Adrenal gland (tissue), 19 donors: ENCODE measurements at regions of chr10 and their contacts with region 1.

Region 1: GRCh38 chr10:31875608-31876007 is 53.0 kb downstream of the ARHGAP12 start:
- DNase-seq: no peak
- H3K4me3 ChIP-seq: no peak overlapping the region
- H3K27ac ChIP-seq: no peak overlapping the region
- H3K4me1 ChIP-seq: peaks cover 0 to 37% of the 10 kb centered on the region in 2 donors
- H3K27me3 ChIP-seq: no peaks in the 10 kb centered on the region
- CTCF ChIP-seq: no peak
- POLR2A ChIP-seq: no peak

Region 2: DNA sequence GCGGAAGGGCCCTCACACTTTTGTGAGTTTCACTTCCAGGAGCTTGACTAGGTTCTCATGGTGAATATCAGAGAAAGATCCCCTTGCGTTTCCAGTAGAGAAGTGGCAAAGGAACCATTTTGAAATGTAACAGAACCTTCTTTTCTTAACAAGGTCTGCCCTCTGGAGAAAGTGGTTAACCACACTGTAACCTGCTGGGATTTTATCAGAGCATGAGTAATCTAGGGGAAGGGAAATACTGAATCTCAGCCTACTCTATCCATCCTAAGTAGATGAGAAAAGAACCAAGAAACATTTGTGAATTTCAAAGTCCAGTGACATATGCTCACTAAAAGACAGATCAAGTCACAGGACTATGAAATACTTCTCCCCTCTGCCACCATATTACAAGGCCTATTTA is 321.1 kb before region 1 on chr10:
- intact Hi-C with region 1: no loop called
- DNase-seq: no peak
- H3K4me3 ChIP-seq: no peak overlapping the region
- H3K27ac ChIP-seq: no peak overlapping the region
- H3K4me1 ChIP-seq: no peaks in the 10 kb centered on the region
- H3K27me3 ChIP-seq: no peaks in the 10 kb centered on the region
- CTCF ChIP-seq: no peak
- POLR2A ChIP-seq: no peak

Region 3: GRCh38 chr10:31928549-31929260 is 53.1 kb after region 1 on chr10 and contains the start of gene ARHGAP12:
- intact Hi-C with region 1: loop called in 1 of 2 experiments (anchors 10 kb)
- DNase-seq: peak; percentile 87 to 95 (median 89)
- H3K4me3 ChIP-seq: peak within 1 kb of the TSS; percentile 63 to 94 (median 90)
- H3K27ac ChIP-seq: peak within 1 kb of the TSS; percentile 78 to 96 (median 94)
- H3K4me1 ChIP-seq: peaks cover 8 to 38% of the 10 kb centered on the region in 2 donors
- H3K27me3 ChIP-seq: no peaks in the 10 kb centered on the region
- CTCF ChIP-seq: no peak
- POLR2A ChIP-seq: peak; percentile 76 to 98
- total RNA-seq, gene ARHGAP12: 26.7 to 88.6 (median 32.8) TPM

Region 4: GRCh38 chr10:31961277-31962074 is 85.9 kb after region 1 on chr10:
- intact Hi-C with region 1: no loop called
- DNase-seq: peak in 2 of 7 donors; percentile 22 to 58
- H3K4me3 ChIP-seq: no peak overlapping the region
- H3K27ac ChIP-seq: peak overlapping the region in 2 of 5 donors; percentile 33 to 46
- H3K4me1 ChIP-seq: peaks cover 11 to 42% of the 10 kb centered on the region in 2 donors
- H3K27me3 ChIP-seq: no peaks in the 10 kb centered on the region
- CTCF ChIP-seq: no peak
- POLR2A ChIP-seq: no peak